Caco-2 (cell line): ENCODE measurements at regions of chrX and their contacts with region 1.

Region 1: DNA sequence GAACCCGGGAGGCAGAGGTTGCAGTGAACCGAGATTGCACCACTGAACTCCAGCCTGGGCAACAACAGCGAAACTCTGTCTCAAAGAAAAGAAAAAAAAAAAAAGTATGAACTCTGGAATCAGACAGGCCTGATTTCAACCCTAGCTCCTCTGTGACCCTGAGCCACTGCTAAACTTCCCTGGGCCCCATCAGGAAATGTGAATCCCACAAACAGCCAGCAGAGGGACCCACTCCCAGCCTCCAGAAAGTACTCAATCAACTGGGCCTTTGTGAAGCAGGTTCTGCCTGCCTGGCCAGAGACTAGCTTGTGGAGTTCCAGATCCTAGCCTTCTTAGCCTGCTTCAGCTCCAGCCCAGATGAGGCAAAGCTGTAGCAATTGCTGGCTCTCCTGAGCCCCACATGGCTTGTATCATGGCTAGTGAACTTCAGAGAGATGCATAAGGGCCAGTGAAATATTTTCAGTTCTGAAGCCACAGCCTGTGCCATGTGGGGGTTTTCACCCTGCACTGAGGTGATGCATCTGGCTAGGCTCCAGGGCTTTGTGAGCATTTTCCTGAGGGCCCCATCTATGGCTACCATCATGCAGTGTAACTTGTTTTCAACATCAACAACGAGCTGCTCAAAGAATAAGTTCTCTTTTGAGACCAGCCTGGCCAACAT is 7.2 kb upstream of the IDS start:
- DNase-seq: peak; percentile 61 to 64
- H3K4me3 ChIP-seq: no peak overlapping the region
- H3K4me3 Mint-ChIP-seq: no peak overlapping the region
- H3K27ac Mint-ChIP-seq: no peak overlapping the region
- H3K4me1 ChIP-seq: peaks cover 26% of the 10 kb centered on the region
- H3K4me1 Mint-ChIP-seq: peaks cover 10% of the 10 kb centered on the region
- H3K27me3 ChIP-seq: no peaks in the 10 kb centered on the region
- H3K27me3 Mint-ChIP-seq: no peaks in the 10 kb centered on the region
- CTCF ChIP-seq: peak in 1 of 2 experiments; percentile 52

Region 2: DNA sequence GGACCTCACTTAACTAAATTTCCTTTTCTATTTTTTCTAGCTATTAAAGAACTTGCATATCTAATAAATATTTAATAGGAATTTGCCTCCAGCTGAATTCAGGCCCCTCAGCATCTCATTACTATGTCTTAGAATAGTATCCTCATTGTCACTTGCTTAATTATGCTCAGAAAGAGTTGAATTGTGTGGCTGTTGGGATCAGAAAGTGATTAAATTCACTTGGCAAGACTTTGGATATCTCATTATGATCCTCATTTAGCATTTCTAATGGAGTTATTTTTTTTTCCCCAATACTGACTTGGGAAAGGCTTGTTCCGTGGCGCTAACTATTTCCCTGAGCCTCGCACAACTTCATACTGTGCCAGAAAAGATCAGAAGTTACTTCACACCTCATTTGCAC is 166.0 kb before region 1 on chrX:
- CTCF ChIA-PET with region 1: no interaction called
- POLR2A ChIA-PET with region 1: no interaction called
- intact Hi-C with region 1: no loop called
- DNase-seq: no peak
- H3K4me3 ChIP-seq: no peak overlapping the region
- H3K4me3 Mint-ChIP-seq: no peak overlapping the region
- H3K27ac Mint-ChIP-seq: no peak overlapping the region
- H3K4me1 ChIP-seq: no peaks in the 10 kb centered on the region
- H3K4me1 Mint-ChIP-seq: no peaks in the 10 kb centered on the region
- H3K27me3 ChIP-seq: no peaks in the 10 kb centered on the region
- H3K27me3 Mint-ChIP-seq: no peaks in the 10 kb centered on the region
- CTCF ChIP-seq: no peak

Region 3: GRCh38 chrX:149495573-149496071 is 16.7 kb before region 1 on chrX:
- CTCF ChIA-PET with region 1: interaction called, 3 read pairs
- POLR2A ChIA-PET with region 1: no interaction called
- intact Hi-C with region 1: loop called (anchors 1 kb)
- DNase-seq: peak; percentile 42 to 45
- H3K4me3 ChIP-seq: no peak overlapping the region
- H3K4me3 Mint-ChIP-seq: no peak overlapping the region
- H3K27ac Mint-ChIP-seq: peak overlapping the region; percentile 42
- H3K4me1 ChIP-seq: peaks cover 35% of the 10 kb centered on the region
- H3K4me1 Mint-ChIP-seq: no peaks in the 10 kb centered on the region
- H3K27me3 ChIP-seq: no peaks in the 10 kb centered on the region
- H3K27me3 Mint-ChIP-seq: no peaks in the 10 kb centered on the region
- CTCF ChIP-seq: no peak

Region 4: GRCh38 chrX:149527705-149528104 is 15.3 kb after region 1 on chrX:
- CTCF ChIA-PET with region 1: interaction called, 4 read pairs
- POLR2A ChIA-PET with region 1: interaction called, 3 read pairs
- intact Hi-C with region 1: loop called (anchors 1 kb)
- DNase-seq: peak in 1 of 2 experiments; percentile 26
- H3K4me3 ChIP-seq: no peak overlapping the region
- H3K4me3 Mint-ChIP-seq: no peak overlapping the region
- H3K27ac Mint-ChIP-seq: no peak overlapping the region
- H3K4me1 ChIP-seq: peaks cover 8% of the 10 kb centered on the region
- H3K4me1 Mint-ChIP-seq: no peaks in the 10 kb centered on the region
- H3K27me3 ChIP-seq: no peaks in the 10 kb centered on the region
- H3K27me3 Mint-ChIP-seq: no peaks in the 10 kb centered on the region
- CTCF ChIP-seq: peak in 1 of 2 experiments; percentile 58

Region 5: GRCh38 chrX:149539283-149540130 is 27.2 kb after region 1 on chrX:
- CTCF ChIA-PET with region 1: interaction called, 36 read pairs
- POLR2A ChIA-PET with region 1: interaction called, 4 read pairs
- intact Hi-C with region 1: loop called (anchors 1 kb)
- DNase-seq: peak; percentile 86 to 92
- H3K4me3 ChIP-seq: peak overlapping the region; percentile 53
- H3K4me3 Mint-ChIP-seq: peak overlapping the region; percentile 89
- H3K27ac Mint-ChIP-seq: peak overlapping the region; percentile 98
- H3K4me1 ChIP-seq: no peaks in the 10 kb centered on the region
- H3K4me1 Mint-ChIP-seq: no peaks in the 10 kb centered on the region
- H3K27me3 ChIP-seq: no peaks in the 10 kb centered on the region
- H3K27me3 Mint-ChIP-seq: no peaks in the 10 kb centered on the region
- CTCF ChIP-seq: no peak

Region 6: GRCh38 chrX:149715468-149715867 is 203.1 kb after region 1 on chrX:
- CTCF ChIA-PET with region 1: no interaction called
- POLR2A ChIA-PET with region 1: no interaction called
- intact Hi-C with region 1: no loop called
- DNase-seq: no peak
- H3K4me3 ChIP-seq: no peak overlapping the region
- H3K4me3 Mint-ChIP-seq: no peak overlapping the region
- H3K27ac Mint-ChIP-seq: no peak overlapping the region
- H3K4me1 ChIP-seq: peaks cover 6% of the 10 kb centered on the region; the same call in 1 of the 2 replicates
- H3K4me1 Mint-ChIP-seq: peaks cover 6% of the 10 kb centered on the region
- H3K27me3 ChIP-seq: no peaks in the 10 kb centered on the region
- H3K27me3 Mint-ChIP-seq: peaks cover 7% of the 10 kb centered on the region
- CTCF ChIP-seq: no peak

Region 7: GRCh38 chrX:149871940-149872339 is 359.6 kb after region 1 on chrX:
- CTCF ChIA-PET with region 1: interaction called, 3 read pairs
- POLR2A ChIA-PET with region 1: no interaction called
- intact Hi-C with region 1: loop called (anchors 1 kb)
- DNase-seq: peak; percentile 53 to 72
- H3K4me3 ChIP-seq: no peak overlapping the region
- H3K4me3 Mint-ChIP-seq: no peak overlapping the region
- H3K27ac Mint-ChIP-seq: no peak overlapping the region
- H3K4me1 ChIP-seq: no peaks in the 10 kb centered on the region
- H3K4me1 Mint-ChIP-seq: no peaks in the 10 kb centered on the region
- H3K27me3 ChIP-seq: no peaks in the 10 kb centered on the region
- H3K27me3 Mint-ChIP-seq: peaks cover 17% of the 10 kb centered on the region
- CTCF ChIP-seq: peak; percentile 63 to 79